Left colon (tissue), 2 donors: ENCODE measurements at regions of chr17 and their contacts with region 1.

Region 1: DNA sequence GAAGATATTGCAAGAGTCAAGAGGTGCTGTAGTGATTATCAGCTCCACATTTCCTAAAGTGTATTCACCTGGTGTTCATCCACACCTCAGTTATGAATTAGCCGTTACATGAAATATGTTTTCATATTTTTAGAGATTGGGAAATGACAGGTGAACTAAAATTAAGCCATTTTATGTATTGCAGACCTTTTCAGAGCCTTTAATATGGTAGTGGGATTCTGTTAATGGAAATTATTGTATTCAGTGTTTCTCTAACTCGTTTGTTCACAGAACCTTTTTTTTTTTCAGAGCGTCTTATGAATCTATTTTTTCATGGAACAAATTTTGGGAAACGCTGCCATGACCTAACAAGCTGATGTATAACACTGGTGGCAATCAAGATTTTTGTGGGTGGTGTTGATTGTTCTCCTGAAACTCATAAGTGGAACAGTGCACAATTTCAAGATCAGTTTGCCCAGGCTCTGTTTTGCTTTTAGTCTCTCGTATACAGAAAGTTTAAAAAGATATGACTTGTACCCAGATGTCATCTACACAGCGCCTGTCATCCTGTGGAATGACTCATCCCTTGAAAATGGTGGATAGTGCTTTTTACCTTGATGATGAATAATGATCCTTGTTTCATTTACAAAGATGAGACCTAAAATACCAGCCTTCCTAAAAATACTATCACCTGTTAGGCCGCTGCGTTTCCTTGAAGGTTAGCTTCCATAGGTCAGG is 88.8 kb downstream of the ARHGAP44 start:
- DNase-seq: no peak
- ATAC-seq: no peak

Region 2: GRCh38 chr17:12815642-12816141 is 62.4 kb before region 1 on chr17:
- intact Hi-C with region 1: no loop called
- DNase-seq: peak in 1 of 2 donors; percentile 28
- ATAC-seq: peak; percentile 54

Region 3: GRCh38 chr17:12940699-12941098 is 62.6 kb after region 1 on chr17:
- intact Hi-C with region 1: loop called in 1 of 2 experiments (anchors 10 kb)
- DNase-seq: no peak
- ATAC-seq: no peak